Common myeloid progenitor, CD34-positive (primary cell): ENCODE measurements at regions of chr14 and their contacts with region 1.

Region 1: DNA sequence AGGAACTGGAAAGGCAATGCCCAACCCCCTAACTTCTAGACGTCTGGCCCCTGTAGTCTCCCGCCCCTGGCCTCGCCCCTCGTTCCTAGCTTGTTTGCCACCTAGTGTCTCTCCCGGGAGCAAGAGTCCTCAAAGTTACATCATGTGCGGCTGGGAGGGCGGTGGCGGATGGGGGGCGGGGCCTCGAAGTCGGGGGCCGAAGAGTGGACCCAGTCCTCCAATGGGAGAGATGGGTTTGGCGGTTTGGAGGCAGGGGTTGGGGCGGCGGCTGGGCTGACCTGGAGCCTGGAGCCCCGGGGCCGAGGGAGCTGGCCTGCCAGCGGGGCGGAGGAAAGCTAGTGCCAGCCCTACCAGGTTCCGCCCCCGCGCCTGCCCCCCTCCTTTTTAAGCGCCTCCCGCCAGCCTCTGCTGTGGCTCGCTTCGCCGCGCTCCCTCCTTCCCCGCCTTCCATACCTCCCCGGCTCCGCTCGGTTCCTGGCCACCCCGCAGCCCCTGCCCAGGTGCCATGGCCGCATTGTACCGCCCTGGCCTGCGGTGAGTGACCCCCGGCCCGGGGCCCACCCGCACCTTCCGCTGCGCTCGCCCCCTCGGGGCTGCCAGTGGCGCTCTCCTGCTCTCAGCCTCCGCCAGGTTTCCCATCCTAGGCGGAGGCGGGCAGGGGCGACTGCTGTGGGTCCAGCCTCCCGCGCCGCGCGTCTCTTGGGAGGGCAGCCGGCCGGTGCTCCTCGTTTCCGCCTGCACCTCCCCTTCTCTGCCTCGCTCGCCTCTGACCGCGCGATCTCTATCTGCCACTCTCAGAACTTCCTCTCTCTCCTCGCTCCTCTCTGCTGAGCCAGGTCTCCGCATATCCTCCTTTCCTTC is at the start of gene PCK2:
- DNase-seq: peak; percentile 79 to 87 (median 84)
- H3K4me3 ChIP-seq: peak within 1 kb of the TSS; percentile 48 to 86 (median 77)
- H3K27ac ChIP-seq: peak within 1 kb of the TSS; percentile 80 to 90
- H3K4me1 ChIP-seq: peaks cover 0 to 37% (median 29%) of the 10 kb centered on the region in 4 experiments
- H3K27me3 ChIP-seq: no peaks in the 10 kb centered on the region

Region 2: GRCh38 chr14:24013654-24014514 is 80.2 kb before region 1 on chr14:
- CTCF ChIA-PET with region 1: interaction called, 10 read pairs
- POLR2A ChIA-PET with region 1: no interaction called
- DNase-seq: peak; percentile 73 to 85 (median 79)
- H3K4me3 ChIP-seq: no peak overlapping the region
- H3K27ac ChIP-seq: no peak overlapping the region
- H3K4me1 ChIP-seq: peaks cover 0 to 4% (median 0%) of the 10 kb centered on the region in 4 experiments
- H3K27me3 ChIP-seq: no peaks in the 10 kb centered on the region

Region 3: DNA sequence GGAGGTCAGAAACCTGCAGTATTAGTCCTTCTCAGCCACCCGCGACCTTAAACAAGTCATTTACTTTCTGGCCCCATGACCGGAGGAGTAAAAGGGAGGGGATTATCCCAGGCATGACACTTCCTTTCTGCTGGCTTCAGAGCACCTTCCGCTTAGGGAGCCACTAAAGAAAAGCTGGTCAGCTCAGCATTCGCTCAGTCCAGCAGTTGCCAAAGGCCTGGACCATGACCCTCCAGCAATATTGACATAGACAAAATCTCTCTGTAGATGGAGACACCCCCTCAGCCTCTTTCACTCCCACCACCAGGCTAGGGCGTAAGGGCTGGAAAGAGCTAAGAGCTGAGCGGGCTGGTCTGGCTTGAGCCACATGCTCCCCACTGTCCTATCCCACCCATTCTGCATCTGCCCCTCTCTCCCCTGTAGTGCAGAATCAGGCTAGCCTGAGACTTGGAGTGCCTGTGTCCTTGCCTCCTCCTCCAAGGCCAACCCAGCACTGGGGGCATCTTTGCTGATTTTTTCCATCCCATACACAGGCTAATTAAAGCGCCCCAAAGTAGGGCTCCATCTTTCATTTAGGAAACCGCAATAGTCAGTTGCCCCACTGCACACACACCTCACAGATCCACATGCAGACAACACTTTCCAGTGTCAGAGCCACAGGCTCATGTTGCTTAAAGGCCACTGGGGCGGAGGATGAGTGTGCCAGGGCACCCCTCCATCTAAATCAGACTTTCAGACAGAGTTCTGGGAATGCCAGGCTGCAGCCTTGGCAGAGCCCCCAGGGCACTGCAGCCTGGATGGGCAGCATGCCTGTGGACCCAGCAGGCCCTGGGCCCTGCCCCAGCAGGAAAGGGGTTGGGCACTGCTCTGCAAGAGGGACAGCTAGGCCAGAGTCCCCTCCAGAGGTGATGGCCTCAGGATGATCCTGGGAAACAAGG is 26.7 kb before region 1 on chr14:
- CTCF ChIA-PET with region 1: interaction called, 178 read pairs
- POLR2A ChIA-PET with region 1: no interaction called
- DNase-seq: no peak
- H3K4me3 ChIP-seq: no peak overlapping the region
- H3K27ac ChIP-seq: no peak overlapping the region
- H3K4me1 ChIP-seq: no peaks in the 10 kb centered on the region
- H3K27me3 ChIP-seq: peaks cover 0 to 8% (median 0%) of the 10 kb centered on the region in 5 experiments

Region 4: GRCh38 chr14:24080888-24081738 is 13.0 kb before region 1 on chr14:
- CTCF ChIA-PET with region 1: interaction called, 64 read pairs
- POLR2A ChIA-PET with region 1: no interaction called
- DNase-seq: peak; percentile 43 to 84 (median 80)
- H3K4me3 ChIP-seq: peak overlapping the region; percentile 60 to 81 (median 67)
- H3K27ac ChIP-seq: no peak overlapping the region
- H3K4me1 ChIP-seq: peaks cover 7 to 27% (median 26%) of the 10 kb centered on the region in 4 experiments
- H3K27me3 ChIP-seq: peaks cover 0 to 12% (median 7%) of the 10 kb centered on the region in 5 experiments

Region 5: DNA sequence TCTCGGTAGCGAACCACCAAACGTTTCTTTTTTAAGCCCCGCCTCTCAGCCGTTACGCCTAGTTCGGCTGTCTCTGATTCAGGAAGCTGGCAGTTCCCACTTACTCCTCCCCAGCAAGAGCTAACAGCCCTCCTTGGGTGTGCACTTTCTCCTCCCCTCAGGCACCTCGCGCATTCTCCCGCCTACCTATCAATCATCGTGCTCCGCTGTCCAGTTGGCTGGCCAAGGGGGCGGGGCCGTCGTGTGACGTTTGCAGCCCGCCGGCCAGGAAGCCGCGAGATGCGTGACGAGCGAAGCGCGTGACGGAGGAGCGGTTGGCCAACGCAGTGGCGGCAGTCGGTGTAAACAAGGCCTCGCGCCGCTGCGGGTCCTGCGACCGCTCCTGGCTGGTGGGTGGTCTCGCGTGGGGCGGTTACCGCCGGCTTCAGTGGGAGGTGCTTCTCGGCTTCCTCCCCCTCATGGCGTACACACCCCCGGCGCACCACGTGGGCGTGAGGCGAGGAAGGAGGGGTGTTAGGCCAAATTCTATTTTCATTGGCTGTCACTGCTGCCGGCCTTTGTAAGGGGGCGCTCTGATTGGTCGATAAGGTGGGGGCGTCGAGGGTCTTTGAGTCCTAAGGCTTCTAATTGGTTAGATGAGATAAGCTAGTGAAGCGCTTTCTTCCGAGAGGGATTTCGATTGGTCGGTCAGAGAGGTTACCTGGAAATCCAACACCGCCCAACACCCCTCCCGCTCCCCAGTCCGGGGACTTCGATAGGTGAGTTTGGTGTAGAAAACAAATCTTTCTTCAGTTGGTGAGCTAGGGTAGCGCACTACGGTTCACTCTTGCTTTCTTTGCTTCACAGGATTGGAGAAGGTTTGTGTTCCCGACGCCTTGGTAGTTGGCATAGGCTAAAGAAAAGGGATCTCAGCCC is 20.7 kb after region 1 on chr14 and contains the starts of genes DCAF11 and NRL:
- CTCF ChIA-PET with region 1: interaction called, 83 read pairs
- POLR2A ChIA-PET with region 1: interaction called, 11 read pairs
- DNase-seq: peak; percentile 100
- H3K4me3 ChIP-seq: peak within 1 kb of the TSS; percentile 51 to 98 (median 91)
- H3K27ac ChIP-seq: peak within 1 kb of the TSS; percentile 95 to 98
- H3K4me1 ChIP-seq: peaks cover 8 to 33% (median 19%) of the 10 kb centered on the region in 4 experiments
- H3K27me3 ChIP-seq: no peaks in the 10 kb centered on the region